CD8-positive, alpha-beta T cell (primary cell): ENCODE measurements at regions of chr17 and their contacts with region 1.

Region 1: DNA sequence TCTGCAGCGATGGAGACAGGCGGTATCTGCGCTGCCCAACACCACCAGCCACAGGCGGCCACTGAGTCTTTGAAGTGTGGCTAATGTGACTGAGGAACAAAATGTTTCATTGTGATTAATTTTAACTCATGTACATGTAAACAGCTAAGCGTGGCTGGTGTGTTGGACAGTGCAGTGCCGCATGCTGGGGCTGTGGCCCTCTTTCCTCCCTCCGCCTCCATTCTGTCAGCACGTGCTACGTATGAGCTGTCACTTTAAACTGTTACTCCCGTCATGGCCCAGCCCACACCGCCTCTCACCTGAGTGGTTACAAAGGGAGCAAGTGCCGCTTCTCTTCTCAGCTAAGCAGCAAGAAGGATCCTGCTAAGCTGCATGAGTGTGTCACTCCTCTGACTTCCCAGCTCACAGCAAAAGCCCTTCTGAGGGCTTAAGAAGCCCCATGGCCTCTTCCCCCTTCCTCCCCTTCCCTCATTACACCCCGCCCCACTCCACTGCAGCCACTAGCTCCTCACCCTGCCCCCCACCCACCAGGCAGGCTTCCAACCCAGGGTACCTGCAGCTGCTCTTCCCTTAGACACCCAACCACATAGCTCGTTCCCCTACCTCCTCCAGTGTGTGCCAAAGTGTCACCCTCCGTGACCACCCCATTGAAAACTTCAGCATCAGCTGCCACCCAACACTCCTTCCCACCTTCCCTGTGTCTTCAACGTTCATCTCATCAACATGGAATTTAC is 15.0 kb downstream of the HASPIN start:
- DNase-seq: peak in 8 of 9 experiments; percentile 42 to 83 (median 74)
- ATAC-seq: peak; percentile 87
- H3K4me3 ChIP-seq: no peak overlapping the region
- H3K4me3 Mint-ChIP-seq: peak overlapping the region; percentile 38
- H3K27ac ChIP-seq: peak overlapping the region in 1 of 2 experiments; percentile 2
- H3K27ac Mint-ChIP-seq: peak overlapping the region; percentile 88
- H3K4me1 ChIP-seq: peaks cover 36% of the 10 kb centered on the region
- H3K4me1 Mint-ChIP-seq: peaks cover 46% of the 10 kb centered on the region
- H3K27me3 ChIP-seq: no peaks in the 10 kb centered on the region
- H3K27me3 Mint-ChIP-seq: no peaks in the 10 kb centered on the region
- CTCF ChIP-seq: no peak

Region 2: DNA sequence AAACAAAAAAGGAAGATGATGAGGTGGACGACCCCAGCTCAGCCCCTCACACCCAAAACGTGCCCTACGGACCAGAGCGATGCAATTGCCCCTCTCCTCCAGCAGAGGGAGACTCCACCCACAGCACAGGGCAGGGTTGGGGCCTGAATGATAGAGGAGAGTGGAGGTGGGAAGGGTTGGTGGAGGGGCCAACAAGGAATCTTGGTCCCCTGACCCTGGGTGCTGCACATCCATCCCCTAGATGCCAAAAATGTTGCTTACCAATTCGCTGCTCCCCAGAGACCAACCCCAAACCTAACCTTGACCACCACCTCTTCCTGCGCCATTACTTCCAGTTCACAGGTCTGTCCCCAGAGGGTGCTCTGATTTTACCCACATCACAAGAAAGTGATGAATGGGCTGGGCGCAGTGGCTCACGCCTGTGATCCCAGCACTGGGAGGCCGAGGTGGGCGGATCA is 55.6 kb before region 1 on chr17:
- CTCF ChIA-PET with region 1: interaction called, 43 read pairs
- POLR2A ChIA-PET with region 1: no interaction called
- intact Hi-C with region 1: loop called (anchors 2 kb)
- DNase-seq: peak; percentile 27 to 80 (median 65)
- ATAC-seq: peak; percentile 99
- H3K4me3 ChIP-seq: no peak overlapping the region
- H3K4me3 Mint-ChIP-seq: no peak overlapping the region
- H3K27ac ChIP-seq: no peak overlapping the region
- H3K27ac Mint-ChIP-seq: no peak overlapping the region
- H3K4me1 ChIP-seq: no peaks in the 10 kb centered on the region
- H3K4me1 Mint-ChIP-seq: peaks cover 8% of the 10 kb centered on the region
- H3K27me3 ChIP-seq: no peaks in the 10 kb centered on the region
- H3K27me3 Mint-ChIP-seq: no peaks in the 10 kb centered on the region
- CTCF ChIP-seq: peak; percentile 78

Region 3: GRCh38 chr17:3754458-3755334 is 16.0 kb after region 1 on chr17:
- CTCF ChIA-PET with region 1: interaction called, 102 read pairs
- POLR2A ChIA-PET with region 1: interaction called, 4 read pairs
- intact Hi-C with region 1: no loop called
- DNase-seq: peak; percentile 69 to 89 (median 82)
- ATAC-seq: peak; percentile 96
- H3K4me3 ChIP-seq: peak overlapping the region; percentile 23 to 53
- H3K4me3 Mint-ChIP-seq: peak overlapping the region; percentile 56
- H3K27ac ChIP-seq: peak overlapping the region; percentile 45 to 73
- H3K27ac Mint-ChIP-seq: peak overlapping the region; percentile 90
- H3K4me1 ChIP-seq: peaks cover 36% of the 10 kb centered on the region
- H3K4me1 Mint-ChIP-seq: peaks cover 39% of the 10 kb centered on the region
- H3K27me3 ChIP-seq: no peaks in the 10 kb centered on the region
- H3K27me3 Mint-ChIP-seq: no peaks in the 10 kb centered on the region
- CTCF ChIP-seq: no peak

Region 4: DNA sequence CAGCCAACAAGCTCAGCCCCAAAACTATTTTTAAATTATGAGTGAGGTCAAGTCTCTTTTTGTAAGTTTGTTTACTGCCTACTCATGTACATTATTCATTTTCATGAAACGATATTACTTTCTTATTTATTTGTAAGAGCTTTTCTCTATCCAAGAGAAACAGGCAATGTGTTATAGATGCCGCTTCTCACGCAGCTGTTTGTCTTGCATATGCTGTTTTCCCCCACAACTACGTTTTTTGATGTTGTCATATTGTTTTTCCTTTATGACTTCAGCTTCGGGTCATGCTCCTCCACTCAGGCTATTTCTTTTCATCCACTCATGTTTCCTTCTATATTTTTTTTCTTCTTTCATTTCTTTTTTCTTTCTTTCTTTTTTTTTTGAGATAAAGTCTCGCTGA is 42.3 kb after region 1 on chr17:
- CTCF ChIA-PET with region 1: interaction called, 10 read pairs
- POLR2A ChIA-PET with region 1: interaction called, 3 read pairs
- intact Hi-C with region 1: no loop called
- DNase-seq: no peak
- ATAC-seq: no peak
- H3K4me3 ChIP-seq: no peak overlapping the region
- H3K4me3 Mint-ChIP-seq: no peak overlapping the region
- H3K27ac ChIP-seq: no peak overlapping the region
- H3K27ac Mint-ChIP-seq: no peak overlapping the region
- H3K4me1 ChIP-seq: no peaks in the 10 kb centered on the region
- H3K4me1 Mint-ChIP-seq: peaks cover 3% of the 10 kb centered on the region
- H3K27me3 ChIP-seq: no peaks in the 10 kb centered on the region
- H3K27me3 Mint-ChIP-seq: no peaks in the 10 kb centered on the region
- CTCF ChIP-seq: no peak

Region 5: DNA sequence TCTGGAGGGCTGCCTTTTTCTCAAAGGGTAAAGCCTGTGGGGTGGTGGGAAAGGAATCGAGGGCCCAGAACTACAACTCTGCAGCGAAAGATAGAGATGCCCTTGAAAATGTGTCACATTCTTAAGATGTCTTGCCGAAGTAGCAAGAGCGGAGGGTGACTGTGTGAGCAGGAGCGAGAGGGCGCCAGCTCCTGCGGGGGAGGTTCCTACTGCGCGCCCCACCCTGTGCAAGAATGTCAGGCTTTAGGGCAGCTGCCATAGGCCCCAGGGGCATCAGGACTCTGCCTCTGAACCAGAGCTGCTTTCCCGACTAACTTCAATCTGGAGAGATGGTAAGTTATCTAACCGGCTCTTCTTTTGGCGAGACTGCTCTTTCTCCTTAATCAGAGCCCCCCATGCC is 74.0 kb after region 1 on chr17:
- CTCF ChIA-PET with region 1: interaction called, 47 read pairs
- POLR2A ChIA-PET with region 1: no interaction called
- intact Hi-C with region 1: no loop called
- DNase-seq: no peak
- ATAC-seq: no peak
- H3K4me3 ChIP-seq: no peak overlapping the region
- H3K4me3 Mint-ChIP-seq: no peak overlapping the region
- H3K27ac ChIP-seq: no peak overlapping the region
- H3K27ac Mint-ChIP-seq: no peak overlapping the region
- H3K4me1 ChIP-seq: no peaks in the 10 kb centered on the region
- H3K4me1 Mint-ChIP-seq: no peaks in the 10 kb centered on the region
- H3K27me3 ChIP-seq: no peaks in the 10 kb centered on the region
- H3K27me3 Mint-ChIP-seq: no peaks in the 10 kb centered on the region
- CTCF ChIP-seq: no peak

Region 6: GRCh38 chr17:3845621-3846441 is 107.1 kb after region 1 on chr17 and contains the start of gene NCBP3:
- CTCF ChIA-PET with region 1: interaction called, 95 read pairs
- POLR2A ChIA-PET with region 1: interaction called, 27 read pairs
- intact Hi-C with region 1: loop called (anchors 1 kb)
- DNase-seq: peak; percentile 80 to 95 (median 91)
- ATAC-seq: peak; percentile 94
- H3K4me3 ChIP-seq: peak within 1 kb of the TSS; percentile 84 to 99
- H3K4me3 Mint-ChIP-seq: peak within 1 kb of the TSS; percentile 93
- H3K27ac ChIP-seq: peak within 1 kb of the TSS; percentile 77 to 87
- H3K27ac Mint-ChIP-seq: peak within 1 kb of the TSS; percentile 89
- H3K4me1 ChIP-seq: peaks cover 14% of the 10 kb centered on the region
- H3K4me1 Mint-ChIP-seq: peaks cover 29% of the 10 kb centered on the region
- H3K27me3 ChIP-seq: no peaks in the 10 kb centered on the region
- H3K27me3 Mint-ChIP-seq: peaks cover 2% of the 10 kb centered on the region
- CTCF ChIP-seq: peak; percentile 88
- total RNA-seq, gene NCBP3: 28.4 to 35.3 TPM

Region 7: DNA sequence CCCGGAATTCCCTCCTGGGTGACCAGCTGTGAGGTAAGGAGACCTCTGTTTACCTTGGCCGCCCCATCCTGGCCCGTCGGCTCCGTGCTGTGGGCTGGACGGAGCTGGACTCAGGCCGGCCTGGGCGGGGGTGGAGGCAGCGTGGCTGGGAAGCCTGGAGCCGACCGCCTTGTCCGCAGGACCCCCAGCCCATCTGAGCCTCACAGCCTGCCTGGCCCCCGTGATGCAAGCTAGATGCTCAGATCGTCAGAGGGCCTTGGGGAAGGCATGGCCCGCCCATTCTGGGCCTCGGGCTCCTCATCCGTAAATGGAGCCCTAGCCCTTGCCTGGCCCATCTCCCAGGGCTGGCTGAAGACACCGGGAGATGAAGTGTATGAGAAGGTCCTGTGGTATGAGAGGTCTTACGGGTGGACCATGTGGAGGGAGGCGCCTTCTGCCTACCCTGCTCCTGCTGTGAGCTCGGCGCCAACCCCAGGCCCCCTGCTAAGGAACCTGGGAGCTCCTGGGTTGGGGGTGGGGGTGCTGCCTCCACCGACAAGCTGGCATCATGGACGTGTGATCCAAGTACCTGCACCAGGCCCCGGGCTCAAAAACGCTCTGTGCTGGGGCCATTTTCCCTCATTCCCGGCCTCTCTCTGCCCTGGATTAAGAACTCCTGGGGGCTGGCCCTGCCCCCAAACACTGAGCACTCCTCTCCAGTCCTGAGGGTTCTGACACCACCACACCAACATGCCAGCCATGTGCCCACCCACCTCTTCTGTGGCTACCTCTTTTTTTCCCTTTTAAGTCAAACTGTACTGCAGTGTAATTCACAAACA is 183.0 kb after region 1 on chr17:
- CTCF ChIA-PET with region 1: no interaction called
- POLR2A ChIA-PET with region 1: no interaction called
- intact Hi-C with region 1: no loop called
- DNase-seq: peak in 1 of 9 experiments; percentile 4
- ATAC-seq: no peak
- H3K4me3 ChIP-seq: no peak overlapping the region
- H3K4me3 Mint-ChIP-seq: no peak overlapping the region
- H3K27ac ChIP-seq: no peak overlapping the region
- H3K27ac Mint-ChIP-seq: no peak overlapping the region
- H3K4me1 ChIP-seq: peaks cover 14% of the 10 kb centered on the region
- H3K4me1 Mint-ChIP-seq: peaks cover 12% of the 10 kb centered on the region
- H3K27me3 ChIP-seq: no peaks in the 10 kb centered on the region
- H3K27me3 Mint-ChIP-seq: no peaks in the 10 kb centered on the region
- CTCF ChIP-seq: no peak